Activated CD4-positive, alpha-beta T cell treated with anti-CD3 and anti-CD28 coated beads for 36 hours (primary cell): ENCODE measurements at regions of chr7 and their contacts with region 1.

Region 1: DNA sequence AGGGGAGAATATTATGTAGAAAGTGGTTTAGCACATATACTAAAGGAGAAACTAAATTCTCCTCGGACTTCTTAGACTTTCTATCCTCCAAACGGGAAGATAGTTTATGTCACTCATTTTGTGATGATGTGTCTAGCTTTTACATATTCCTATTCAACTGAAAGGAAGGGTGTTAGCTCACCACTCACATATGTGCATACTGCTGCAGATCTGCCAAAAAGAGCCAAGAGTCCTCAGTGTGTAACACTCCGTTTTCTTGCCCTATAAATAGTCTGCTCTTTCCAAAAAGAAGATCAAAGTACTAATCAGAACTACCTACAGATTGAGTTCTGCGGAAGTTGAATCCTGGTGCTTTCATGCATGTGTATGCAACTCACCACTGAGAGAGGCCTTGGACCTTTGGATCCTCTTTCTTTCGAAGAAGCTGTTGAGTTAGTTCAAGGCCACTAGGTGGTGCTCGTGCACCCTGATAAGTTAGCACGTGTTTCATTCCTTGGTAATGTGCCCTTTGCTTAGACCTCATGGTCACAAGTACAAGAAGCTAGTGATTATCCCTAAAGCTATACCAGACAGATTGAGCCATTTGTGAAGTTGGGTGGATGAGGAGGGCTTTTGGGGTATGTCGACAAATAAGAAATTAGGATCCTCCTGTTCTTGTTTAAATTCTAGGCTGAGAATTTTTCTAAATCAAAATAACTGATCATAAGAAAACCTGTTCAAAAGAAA is 14.1 kb downstream of the YAE1 start:
- DNase-seq: peak; percentile 85
- ATAC-seq: peak; percentile 94
- H3K4me3 Mint-ChIP-seq: no peak overlapping the region
- H3K27ac Mint-ChIP-seq: peak overlapping the region; percentile 72
- H3K4me1 Mint-ChIP-seq: peaks cover 11% of the 10 kb centered on the region
- H3K27me3 Mint-ChIP-seq: no peaks in the 10 kb centered on the region

Region 2: GRCh38 chr7:39153647-39154046 is 426.7 kb before region 1 on chr7:
- CTCF ChIA-PET with region 1: no interaction called
- POLR2A ChIA-PET with region 1: no interaction called
- intact Hi-C with region 1: no loop called
- DNase-seq: no peak
- ATAC-seq: no peak
- H3K4me3 Mint-ChIP-seq: no peak overlapping the region
- H3K27ac Mint-ChIP-seq: no peak overlapping the region
- H3K4me1 Mint-ChIP-seq: no peaks in the 10 kb centered on the region
- H3K27me3 Mint-ChIP-seq: peaks cover 11% of the 10 kb centered on the region

Region 3: GRCh38 chr7:39566023-39566921 is 14.0 kb before region 1 on chr7 and contains the start of gene YAE1:
- CTCF ChIA-PET with region 1: interaction called, 19 read pairs
- POLR2A ChIA-PET with region 1: interaction called, 3 read pairs
- intact Hi-C with region 1: no loop called
- DNase-seq: peak; percentile 89
- ATAC-seq: peak; percentile 95
- H3K4me3 Mint-ChIP-seq: peak within 1 kb of the TSS; percentile 96
- H3K27ac Mint-ChIP-seq: peak within 1 kb of the TSS; percentile 98
- H3K4me1 Mint-ChIP-seq: peaks cover 14% of the 10 kb centered on the region
- H3K27me3 Mint-ChIP-seq: no peaks in the 10 kb centered on the region
- total RNA-seq, gene YAE1: 9.8 to 13.5 TPM

Region 4: DNA sequence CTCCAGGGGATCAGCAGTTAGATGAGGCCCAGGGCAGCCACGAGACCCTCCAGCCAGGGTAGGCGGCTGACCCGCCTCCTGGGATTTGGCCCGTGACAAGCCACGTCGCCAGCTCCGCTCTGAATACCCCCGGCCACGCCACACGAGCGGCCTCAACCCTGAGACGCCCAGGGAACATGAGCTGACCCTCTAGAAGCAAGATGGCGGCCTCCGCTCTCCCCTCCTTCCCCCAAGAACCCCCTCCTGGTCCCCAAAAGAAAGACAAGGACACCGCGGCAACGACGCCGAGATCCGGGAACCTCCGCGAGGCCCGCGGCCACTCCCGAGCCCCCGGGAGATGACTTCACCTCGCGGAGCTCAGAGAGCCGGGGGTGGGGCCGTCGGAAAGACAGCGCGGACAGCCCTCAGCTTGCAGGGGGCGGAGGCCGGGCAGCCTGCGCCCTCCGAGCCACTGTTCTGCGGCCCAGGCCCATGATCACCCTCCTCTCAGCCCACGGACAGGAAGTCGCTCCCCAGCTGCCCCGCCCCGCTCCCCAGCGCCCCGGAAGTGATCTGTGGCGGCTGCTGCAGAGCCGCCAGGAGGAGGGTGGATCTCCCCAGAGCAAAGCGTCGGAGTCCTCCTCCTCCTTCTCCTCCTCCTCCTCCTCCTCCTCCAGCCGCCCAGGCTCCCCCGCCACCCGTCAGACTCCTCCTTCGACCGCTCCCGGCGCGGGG is 42.9 kb after region 1 on chr7 and contains the start of gene RALA:
- CTCF ChIA-PET with region 1: interaction called, 56 read pairs
- POLR2A ChIA-PET with region 1: no interaction called
- intact Hi-C with region 1: loop called in 1 of 2 experiments (anchors 2 kb)
- DNase-seq: peak; percentile 95
- ATAC-seq: peak; percentile 95
- H3K4me3 Mint-ChIP-seq: peak within 1 kb of the TSS; percentile 87
- H3K27ac Mint-ChIP-seq: peak within 1 kb of the TSS; percentile 91
- H3K4me1 Mint-ChIP-seq: peaks cover 43% of the 10 kb centered on the region
- H3K27me3 Mint-ChIP-seq: no peaks in the 10 kb centered on the region
- total RNA-seq, gene RALA: 30.7 to 33.7 TPM

Region 5: GRCh38 chr7:39709768-39710311 is 129.5 kb after region 1 on chr7:
- CTCF ChIA-PET with region 1: interaction called, 12 read pairs
- POLR2A ChIA-PET with region 1: no interaction called
- intact Hi-C with region 1: no loop called
- DNase-seq: no peak
- ATAC-seq: no peak
- H3K4me3 Mint-ChIP-seq: no peak overlapping the region
- H3K27ac Mint-ChIP-seq: no peak overlapping the region
- H3K4me1 Mint-ChIP-seq: no peaks in the 10 kb centered on the region
- H3K27me3 Mint-ChIP-seq: no peaks in the 10 kb centered on the region

Region 6: DNA sequence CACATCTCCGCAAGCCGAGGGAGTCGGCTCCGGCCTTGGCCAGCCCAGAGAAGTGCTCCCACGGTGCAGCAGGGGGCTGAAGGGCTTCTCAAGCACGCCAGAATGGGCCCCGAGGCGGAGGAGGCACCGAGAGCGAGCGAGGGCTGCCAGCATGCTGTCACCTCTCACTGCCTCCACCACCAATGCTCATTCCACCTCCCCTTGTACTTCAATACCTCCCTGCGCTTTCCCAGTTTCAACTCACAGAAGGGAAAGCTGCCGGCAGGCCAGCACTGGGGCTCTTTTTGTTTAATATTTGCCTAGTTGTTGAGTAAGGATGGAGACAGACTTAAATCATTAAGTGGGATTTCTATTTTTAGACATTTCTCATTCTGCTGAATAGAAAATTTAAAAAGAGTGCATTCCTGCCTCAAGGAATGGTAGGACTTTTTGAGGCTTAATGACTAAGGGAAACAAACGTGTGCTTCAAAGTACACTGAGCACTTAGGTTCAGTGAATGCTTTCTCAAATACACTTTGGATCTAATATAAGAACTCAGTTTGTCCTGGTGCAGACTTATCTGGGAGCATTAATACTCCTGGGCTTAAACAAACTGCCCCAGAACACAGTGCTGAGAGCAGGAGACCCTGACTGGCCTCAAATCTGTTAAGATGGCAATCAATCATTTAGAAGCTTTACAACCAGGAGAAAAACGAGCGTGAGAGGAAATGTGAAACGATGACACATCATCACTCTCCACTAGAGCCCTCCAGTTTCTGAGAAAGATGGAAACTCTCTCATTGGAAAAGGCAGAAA is 174.2 kb after region 1 on chr7:
- CTCF ChIA-PET with region 1: interaction called, 388 read pairs
- POLR2A ChIA-PET with region 1: interaction called, 6 read pairs
- intact Hi-C with region 1: no loop called
- DNase-seq: no peak
- ATAC-seq: peak; percentile 81
- H3K4me3 Mint-ChIP-seq: no peak overlapping the region
- H3K27ac Mint-ChIP-seq: peak overlapping the region; percentile 77
- H3K4me1 Mint-ChIP-seq: peaks cover 11% of the 10 kb centered on the region
- H3K27me3 Mint-ChIP-seq: no peaks in the 10 kb centered on the region

Region 7: DNA sequence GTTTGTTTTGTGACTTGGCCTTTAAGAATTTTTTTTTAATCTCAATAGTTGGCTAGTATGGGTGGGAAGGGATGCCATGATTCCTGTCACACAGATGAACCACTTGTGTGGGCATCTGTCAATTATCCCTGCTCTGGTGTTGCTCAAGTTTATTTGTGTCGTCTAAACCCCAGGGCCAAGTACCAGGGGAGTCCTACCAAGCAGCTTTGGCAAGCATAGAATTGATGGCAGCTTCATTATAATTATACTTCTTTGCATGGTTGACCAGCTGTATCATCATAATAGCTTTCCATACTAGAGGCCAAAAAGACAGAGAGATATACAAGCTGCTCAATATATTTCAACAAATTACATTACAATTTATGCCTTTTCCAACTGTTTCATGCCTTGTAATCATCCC is 584.9 kb after region 1 on chr7:
- CTCF ChIA-PET with region 1: no interaction called
- POLR2A ChIA-PET with region 1: no interaction called
- intact Hi-C with region 1: no loop called
- DNase-seq: no peak
- ATAC-seq: no peak
- H3K4me3 Mint-ChIP-seq: no peak overlapping the region
- H3K27ac Mint-ChIP-seq: no peak overlapping the region
- H3K4me1 Mint-ChIP-seq: no peaks in the 10 kb centered on the region
- H3K27me3 Mint-ChIP-seq: peaks cover 3% of the 10 kb centered on the region